Heart right ventricle (tissue), 16 donors: ENCODE measurements at regions of chr20 and their contacts with region 1.

Region 1: GRCh38 chr20:444862-445426 is 17.4 kb downstream of the TBC1D20 start:
- DNase-seq: no peak
- ATAC-seq: peak; percentile 52 to 72 (median 65)
- H3K4me3 ChIP-seq: no peak overlapping the region
- H3K27ac ChIP-seq: peak overlapping the region in 7 of 10 donors; percentile 9 to 39 (median 27)
- H3K4me1 ChIP-seq: peaks cover 9 to 36% (median 23%) of the 10 kb centered on the region in 9 donors
- H3K27me3 ChIP-seq: no peaks in the 10 kb centered on the region
- CTCF ChIP-seq: no peak

Region 2: DNA sequence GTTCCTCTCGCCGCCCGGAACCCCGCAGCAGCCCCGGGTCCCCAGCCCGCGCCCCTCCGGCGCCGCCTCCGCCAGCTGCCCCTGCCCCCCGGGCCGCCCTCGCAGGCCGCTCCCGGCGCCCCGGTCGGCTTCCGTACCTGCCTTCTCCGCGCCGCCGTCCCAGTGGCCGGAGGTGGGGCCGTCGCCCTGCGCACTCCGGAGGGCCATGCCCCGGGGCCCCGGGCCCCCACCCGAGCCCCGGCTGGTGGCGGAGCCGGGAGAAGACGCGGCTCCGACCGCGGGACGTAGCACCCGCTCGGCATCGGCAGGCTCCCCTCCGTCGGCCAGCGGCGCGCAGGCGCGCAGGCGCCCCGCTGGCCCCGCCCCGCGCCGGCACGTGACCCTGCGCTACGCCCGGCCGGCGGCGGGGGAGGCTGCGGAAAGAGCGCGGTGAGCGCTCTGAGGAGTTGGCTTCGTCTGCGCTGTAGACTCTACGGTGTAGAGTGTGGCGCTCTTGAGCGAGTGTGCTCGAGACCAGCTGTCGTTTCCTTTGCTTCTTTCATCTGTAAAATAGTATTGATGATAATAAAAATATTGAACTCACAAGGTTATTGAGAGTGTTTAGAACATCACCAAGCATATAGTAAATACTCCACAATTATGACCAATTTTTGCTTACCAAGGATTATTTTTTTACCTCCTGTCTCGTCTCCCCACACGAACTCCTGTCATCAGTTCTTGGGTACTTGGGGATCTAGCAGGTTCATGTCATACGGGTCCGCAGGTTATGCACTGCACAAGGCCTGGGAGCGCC is 17.5 kb after region 1 on chr20 and contains the start of gene TBC1D20:
- intact Hi-C with region 1: loop called in 1 of 10 experiments (anchors 2 kb)
- DNase-seq: peak; percentile 83 to 87
- ATAC-seq: peak; percentile 96 to 99 (median 98)
- H3K4me3 ChIP-seq: peak within 1 kb of the TSS; percentile 70 to 94 (median 86)
- H3K27ac ChIP-seq: peak within 1 kb of the TSS; percentile 87 to 99 (median 94)
- H3K4me1 ChIP-seq: peaks cover 2 to 53% (median 40%) of the 10 kb centered on the region in 9 donors
- H3K27me3 ChIP-seq: no peaks in the 10 kb centered on the region
- CTCF ChIP-seq: peak in 5 of 9 donors; percentile 17 to 47 (median 41)
- total RNA-seq, gene TBC1D20: 20.3 to 28.2 (median 23.5) TPM

Region 3: GRCh38 chr20:815914-816606 is 371.1 kb after region 1 on chr20:
- intact Hi-C with region 1: no loop called
- DNase-seq: peak; percentile 43 to 51
- ATAC-seq: peak in 7 of 8 donors; percentile 25 to 66 (median 48)
- H3K4me3 ChIP-seq: no peak overlapping the region
- H3K27ac ChIP-seq: no peak overlapping the region
- H3K4me1 ChIP-seq: peaks cover 0 to 7% (median 0%) of the 10 kb centered on the region in 9 donors
- H3K27me3 ChIP-seq: peaks cover 0 to 40% (median 11%) of the 10 kb centered on the region in 7 donors
- CTCF ChIP-seq: peak; percentile 93 to 99 (median 97)